ENCODE measurements at regions of chr14 and their contacts with region 1.

Region 1: GRCh38 chr14:56491299-56492285 is 88.0 kb upstream of the TMEM260 start:
- DNase-seq: no peak
- H3K4me3 ChIP-seq: no peak overlapping the region
- CTCF ChIP-seq: peak; percentile 72

Region 2: DNA sequence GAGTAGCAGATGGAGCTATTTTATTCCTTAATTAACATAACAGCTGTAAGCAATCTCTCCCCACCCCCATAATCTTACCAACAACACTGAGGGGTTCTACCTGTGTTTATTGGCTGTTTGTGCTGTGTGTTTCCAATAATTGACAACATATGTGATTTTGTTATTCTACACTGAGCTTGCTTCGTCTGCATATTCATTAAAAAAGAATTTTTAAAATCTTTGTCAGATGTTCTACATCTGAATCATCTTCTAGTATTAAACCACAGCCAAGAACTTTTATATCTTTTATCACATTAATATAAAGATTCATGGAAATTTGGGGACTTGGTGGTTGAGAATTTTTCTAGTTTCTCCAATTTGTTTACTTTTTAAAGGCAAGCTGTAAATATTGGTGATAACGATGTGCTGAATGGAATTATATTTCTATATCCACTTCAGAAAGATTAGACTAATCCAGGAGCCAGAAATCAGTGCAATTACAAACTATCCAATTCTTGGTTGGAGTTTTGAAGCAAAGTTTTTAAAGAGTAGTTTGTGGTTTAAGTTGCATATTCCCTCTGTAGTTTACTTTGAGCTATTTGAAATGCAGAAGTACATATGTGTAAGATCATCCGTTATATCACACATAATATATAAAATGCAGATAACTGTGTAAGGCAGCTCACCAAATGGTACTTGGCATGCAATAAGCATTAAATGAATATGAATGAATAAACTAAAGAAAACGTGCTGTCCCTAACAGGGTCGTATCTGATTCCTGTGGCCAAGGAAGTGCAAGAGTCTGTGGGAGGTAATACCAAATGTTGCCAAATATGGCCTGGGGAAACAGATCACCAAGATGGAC is 166.5 kb before region 1 on chr14:
- CTCF ChIA-PET with region 1: no interaction called
- POLR2A ChIA-PET with region 1: no interaction called
- DNase-seq: no peak
- H3K4me3 ChIP-seq: no peak overlapping the region
- CTCF ChIP-seq: no peak

Region 3: DNA sequence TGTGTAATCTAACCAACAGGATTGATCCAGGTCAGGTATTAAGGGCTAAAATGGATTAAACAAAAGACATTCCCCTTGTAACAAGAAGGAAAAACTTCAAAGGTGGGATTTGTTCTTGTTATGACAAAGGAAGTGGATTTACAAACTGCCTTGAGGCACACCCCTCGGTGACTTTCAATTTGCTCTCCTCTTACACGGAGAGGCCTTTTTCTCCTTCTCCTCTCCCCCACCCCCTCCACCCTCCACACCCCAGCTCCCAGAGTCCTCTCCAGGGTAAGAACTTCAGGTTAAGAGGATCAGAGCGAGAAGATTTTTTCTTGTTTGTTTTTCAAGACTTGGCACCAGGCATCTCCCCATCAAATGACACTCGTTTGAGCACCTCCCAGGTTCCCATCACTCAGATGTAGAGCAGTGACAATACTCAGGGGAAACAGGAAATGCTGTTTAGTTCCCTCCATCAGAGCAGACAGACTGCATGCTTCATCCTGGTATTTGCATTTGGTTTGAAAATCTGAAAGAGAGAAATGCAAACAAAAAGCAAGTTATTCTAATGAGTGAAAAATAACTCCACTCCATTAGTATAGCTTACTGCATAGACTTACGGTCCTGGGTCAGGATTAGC is 10.4 kb after region 1 on chr14:
- CTCF ChIA-PET with region 1: interaction called, 49 read pairs
- POLR2A ChIA-PET with region 1: no interaction called
- DNase-seq: no peak
- H3K4me3 ChIP-seq: no peak overlapping the region
- CTCF ChIP-seq: no peak

Region 4: DNA sequence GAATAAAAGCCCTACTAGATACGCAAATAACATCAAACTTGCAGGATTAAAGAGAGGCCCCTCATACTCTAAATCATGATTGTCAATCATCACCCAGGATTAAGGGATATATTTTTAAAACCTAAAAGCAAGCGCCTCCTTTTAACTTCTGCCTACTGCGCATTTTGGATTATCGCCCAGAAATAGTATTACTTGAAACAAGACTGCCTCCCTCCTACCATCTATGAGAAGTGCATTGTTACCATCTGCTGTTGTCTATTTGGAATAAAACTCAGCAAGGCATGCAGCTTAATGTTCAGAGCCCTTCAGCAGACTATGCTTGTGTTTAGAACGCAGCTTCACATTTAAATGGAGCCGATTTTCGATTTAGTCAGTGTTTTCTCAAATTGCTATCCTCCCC is 697.5 kb after region 1 on chr14:
- CTCF ChIA-PET with region 1: interaction called, 17 read pairs
- POLR2A ChIA-PET with region 1: no interaction called
- DNase-seq: no peak
- H3K4me3 ChIP-seq: no peak overlapping the region
- CTCF ChIP-seq: peak; percentile 15

Region 5: GRCh38 chr14:57317316-57317715 is 825.7 kb after region 1 on chr14:
- CTCF ChIA-PET with region 1: interaction called, 85 read pairs
- POLR2A ChIA-PET with region 1: no interaction called
- DNase-seq: peak; percentile 21
- H3K4me3 ChIP-seq: no peak overlapping the region
- CTCF ChIP-seq: peak; percentile 66